Dendritic cell treated with granulocyte-macrophage colony-stimulating factor and Interleukin-4, amounts not matched to agents 40 ng/mL and 50 ng/mL, for 4 days (primary cell): ENCODE measurements at regions of chr1 and their contacts with region 1.

Region 1: DNA sequence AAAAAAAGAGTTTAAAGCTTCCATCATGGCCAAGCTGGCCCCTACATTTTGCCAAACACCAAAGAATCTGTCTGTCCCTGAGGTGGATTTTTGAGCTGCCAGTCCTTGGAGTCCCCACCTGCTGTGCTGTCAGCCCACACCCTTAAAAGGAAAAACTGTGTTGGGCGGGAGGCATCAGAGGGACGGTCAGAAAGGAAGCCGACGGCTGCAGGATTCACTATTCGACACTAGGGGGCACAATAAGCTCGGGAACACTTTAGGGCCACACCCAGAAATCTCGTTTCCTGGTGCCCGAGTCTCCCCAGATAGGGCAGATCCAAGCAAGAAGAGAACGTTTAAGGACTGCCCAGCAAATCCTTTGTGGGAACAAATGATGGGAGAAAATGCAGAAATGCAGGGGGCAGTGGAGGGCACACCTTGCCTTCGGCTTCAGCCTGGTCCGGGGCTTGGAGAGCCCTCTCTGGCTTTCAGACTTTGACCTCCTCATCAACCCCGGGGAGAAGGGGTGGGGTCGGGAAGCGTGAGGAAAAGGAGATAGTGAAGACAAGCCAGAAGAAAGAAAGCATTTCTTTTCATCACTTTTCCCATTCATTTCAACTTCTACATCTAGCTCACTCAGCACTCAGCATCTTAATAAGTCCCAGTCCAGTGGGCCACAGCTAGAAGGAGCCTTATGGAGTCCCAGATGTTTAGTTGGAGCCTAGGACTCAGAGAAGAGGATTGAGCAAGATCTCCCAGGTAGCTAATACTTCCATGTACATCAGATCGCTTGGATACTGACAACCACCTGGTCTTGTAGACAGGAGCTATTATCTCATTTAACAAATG is 5.0 kb upstream of the CTTNBP2NL start:
- H3K4me3 Mint-ChIP-seq: peak overlapping the region; percentile 84
- H3K27ac Mint-ChIP-seq: peak overlapping the region; percentile 82
- H3K4me1 Mint-ChIP-seq: peaks cover 65% of the 10 kb centered on the region
- H3K27me3 Mint-ChIP-seq: peaks cover 20% of the 10 kb centered on the region

Region 2: GRCh38 chr1:112114540-112114939 is 276.4 kb before region 1 on chr1:
- intact Hi-C with region 1: no loop called
- H3K4me3 Mint-ChIP-seq: no peak overlapping the region
- H3K27ac Mint-ChIP-seq: no peak overlapping the region
- H3K4me1 Mint-ChIP-seq: peaks cover 5% of the 10 kb centered on the region
- H3K27me3 Mint-ChIP-seq: peaks cover 2% of the 10 kb centered on the region

Region 3: DNA sequence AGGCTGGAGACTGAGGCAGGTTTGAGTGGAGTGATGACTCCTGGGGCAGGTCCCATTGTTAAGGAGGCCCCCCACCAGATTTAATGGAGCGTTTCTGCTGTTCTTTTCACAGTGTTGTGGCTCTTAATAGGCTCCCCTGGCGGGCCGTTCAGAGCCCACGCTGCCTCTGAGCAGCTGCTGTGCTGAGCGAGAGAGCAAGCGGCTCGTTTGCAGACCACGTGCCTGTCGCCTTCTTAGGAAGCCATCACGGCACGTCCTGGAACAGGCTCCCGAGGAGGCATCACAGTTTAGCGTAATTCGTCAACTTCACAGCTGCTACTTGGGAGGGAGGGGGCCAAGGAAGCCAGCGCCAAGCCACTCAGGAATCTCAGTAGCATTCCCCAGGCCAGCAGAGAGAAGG is 65.5 kb before region 1 on chr1:
- intact Hi-C with region 1: no loop called
- H3K4me3 Mint-ChIP-seq: no peak overlapping the region
- H3K27ac Mint-ChIP-seq: no peak overlapping the region
- H3K4me1 Mint-ChIP-seq: peaks cover 5% of the 10 kb centered on the region
- H3K27me3 Mint-ChIP-seq: peaks cover 17% of the 10 kb centered on the region

Region 4: DNA sequence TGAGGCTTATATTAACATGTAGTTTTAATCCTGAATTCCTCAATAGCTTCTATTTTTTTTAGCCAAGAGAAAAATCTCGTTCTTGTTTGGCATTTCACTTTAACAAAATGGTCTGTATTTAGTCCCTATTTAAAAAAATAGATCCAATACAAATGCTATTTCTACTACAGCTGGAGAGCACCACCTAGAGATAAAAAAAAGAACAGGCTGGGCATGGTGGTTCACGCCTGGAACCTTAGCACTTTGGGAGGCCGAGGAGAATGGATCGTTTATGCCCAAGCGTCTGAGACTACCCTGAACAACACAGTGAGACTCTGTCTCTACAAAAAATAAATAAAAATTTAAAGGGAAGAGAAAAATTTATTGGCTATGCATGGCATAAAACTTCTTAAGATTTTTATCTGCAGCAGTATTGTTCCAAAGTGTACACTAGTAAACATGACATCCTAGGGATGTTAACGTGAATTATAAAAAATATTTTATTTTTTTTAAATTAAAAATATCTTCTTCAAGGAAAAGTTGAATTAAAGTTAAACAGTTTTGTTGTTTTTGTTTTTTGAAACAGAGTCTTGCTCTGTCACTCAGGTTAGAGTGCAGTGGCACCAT is 223.6 kb after region 1 on chr1:
- intact Hi-C with region 1: loop called (anchors 2 kb)
- H3K4me3 Mint-ChIP-seq: no peak overlapping the region
- H3K27ac Mint-ChIP-seq: no peak overlapping the region
- H3K4me1 Mint-ChIP-seq: peaks cover 11% of the 10 kb centered on the region
- H3K27me3 Mint-ChIP-seq: no peaks in the 10 kb centered on the region

Region 5: GRCh38 chr1:112794654-112795239 is 403.8 kb after region 1 on chr1:
- intact Hi-C with region 1: loop called (anchors 10 kb)
- H3K4me3 Mint-ChIP-seq: no peak overlapping the region
- H3K27ac Mint-ChIP-seq: no peak overlapping the region
- H3K4me1 Mint-ChIP-seq: peaks cover 8% of the 10 kb centered on the region
- H3K27me3 Mint-ChIP-seq: peaks cover 8% of the 10 kb centered on the region